Activated T-helper 1 cell treated with anti-CD3 and anti-CD28 coated beads, Interleukin-12 subunit alpha, Interleukin-12 subunit beta, Interleukin-2, Interleukin-4 antibody, amounts not matched to agents 30 ng/mL and 10 ng/mL and 1 ng/mL, durations not matched to agents 14 hours and 24 hours and 36 hours (primary cell): ENCODE measurements at regions of chr16 and their contacts with region 1.

Region 1: DNA sequence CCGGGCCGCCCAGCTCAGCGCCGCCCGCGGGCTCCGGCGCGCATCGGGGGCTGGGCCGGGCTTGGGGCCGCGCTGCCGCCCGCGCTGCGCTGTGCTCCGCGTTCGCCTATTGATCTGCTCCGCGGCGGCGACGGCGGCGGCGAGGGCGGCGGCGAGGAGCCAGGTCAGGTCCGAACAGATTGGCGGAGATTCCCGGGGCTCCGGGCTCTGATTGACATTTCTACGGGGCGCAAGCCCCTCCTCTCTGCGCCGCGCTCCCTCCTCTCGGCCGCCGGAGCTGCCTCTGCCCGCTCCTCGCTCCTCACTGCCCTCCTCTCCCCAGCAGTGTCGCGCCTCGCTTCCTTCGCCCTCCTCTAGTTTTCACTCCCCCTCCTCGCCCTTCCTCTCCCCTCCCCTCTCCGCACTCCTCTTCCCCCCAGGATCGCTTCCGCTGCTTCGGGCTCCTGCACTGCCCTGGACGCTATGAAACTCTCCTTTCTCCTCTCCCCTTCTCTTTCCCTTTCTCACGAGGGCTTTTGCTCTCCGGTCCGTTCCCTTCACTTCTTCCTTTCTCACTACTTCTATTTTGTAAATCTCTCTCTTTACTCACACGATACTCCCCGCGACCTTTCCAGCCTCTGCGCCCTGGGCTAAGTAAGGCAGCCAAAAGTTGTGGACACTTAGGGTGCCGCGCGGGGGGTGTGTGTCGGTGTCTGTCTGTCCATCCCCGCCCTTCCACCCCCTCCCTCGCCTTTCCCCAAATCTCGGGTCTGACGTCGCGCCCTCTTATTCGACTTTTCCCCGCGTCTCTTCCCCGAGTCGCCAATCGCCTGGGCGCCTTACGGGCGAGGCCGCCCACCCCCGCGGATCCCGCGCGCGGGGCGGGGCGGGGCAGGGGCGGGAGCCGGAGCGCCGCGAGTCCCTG is at the start of gene IRX3:
- DNase-seq: peak; percentile 9
- H3K4me3 Mint-ChIP-seq: peak within 1 kb of the TSS; percentile 81
- H3K27ac Mint-ChIP-seq: peak within 1 kb of the TSS; percentile 88
- H3K4me1 Mint-ChIP-seq: peaks cover 15% of the 10 kb centered on the region
- H3K27me3 Mint-ChIP-seq: peaks cover 61% of the 10 kb centered on the region
- total RNA-seq, gene IRX3: 1.1 and 1.4 TPM in 2 replicates

Region 2: DNA sequence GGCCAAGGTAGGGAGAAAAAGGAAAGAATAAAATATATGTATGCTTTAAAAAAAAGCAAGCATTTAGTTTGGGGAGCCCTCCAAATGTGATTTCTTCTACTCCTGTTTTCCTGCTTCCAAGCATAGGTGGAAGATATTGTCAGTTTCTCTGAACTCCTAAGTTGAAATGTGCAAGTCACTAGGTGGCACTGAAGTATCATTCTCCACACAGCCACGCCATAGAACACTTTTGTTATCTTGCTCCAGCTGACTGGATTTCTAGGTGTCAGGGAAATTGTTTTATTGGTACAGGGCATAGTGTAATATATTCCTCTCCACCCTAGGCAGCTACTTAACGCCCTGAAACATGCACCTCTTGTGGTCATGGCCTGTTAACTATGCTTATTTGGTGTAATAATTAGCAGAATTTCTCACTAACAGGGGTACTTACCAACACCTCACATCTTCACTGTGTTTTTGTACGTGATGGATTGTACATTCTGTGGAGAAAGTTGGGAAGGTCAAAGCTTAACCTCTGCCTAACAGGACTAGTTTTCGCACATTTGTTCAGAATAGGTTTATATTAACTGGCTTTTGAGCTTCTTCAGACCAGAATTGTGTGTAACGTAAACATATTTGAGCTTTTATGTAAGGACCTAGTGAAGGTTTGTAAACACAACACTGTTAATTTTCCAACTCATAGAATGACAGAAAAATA is 513.0 kb before region 1 on chr16:
- intact Hi-C with region 1: loop called (anchors 2 kb)
- DNase-seq: no peak
- H3K4me3 Mint-ChIP-seq: no peak overlapping the region
- H3K27ac Mint-ChIP-seq: no peak overlapping the region
- H3K4me1 Mint-ChIP-seq: peaks cover 27% of the 10 kb centered on the region
- H3K27me3 Mint-ChIP-seq: no peaks in the 10 kb centered on the region

Region 3: DNA sequence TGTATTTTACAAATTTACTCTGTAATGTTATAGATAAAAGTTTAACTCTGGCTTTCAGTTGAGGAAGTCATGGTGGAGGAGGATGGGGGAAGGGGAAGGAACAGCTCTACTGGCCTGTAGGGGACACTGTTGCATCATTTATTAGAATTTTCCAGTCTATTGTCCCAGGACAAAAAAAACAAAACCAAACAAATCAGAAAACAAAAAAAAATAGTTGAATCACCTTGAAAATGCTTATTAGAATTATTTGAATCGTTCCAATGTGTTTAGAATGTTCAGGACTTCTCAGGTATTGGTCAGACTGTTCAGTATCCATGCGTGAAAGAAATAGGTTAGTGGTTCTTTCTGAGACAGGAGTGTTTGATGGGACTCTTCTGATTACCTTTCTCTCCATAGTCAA is 340.3 kb before region 1 on chr16:
- intact Hi-C with region 1: loop called (anchors 5 kb)
- DNase-seq: no peak
- H3K4me3 Mint-ChIP-seq: no peak overlapping the region
- H3K27ac Mint-ChIP-seq: no peak overlapping the region
- H3K4me1 Mint-ChIP-seq: peaks cover 43% of the 10 kb centered on the region
- H3K27me3 Mint-ChIP-seq: no peaks in the 10 kb centered on the region

Region 4: GRCh38 chr16:54929090-54930004 is 643.0 kb after region 1 on chr16:
- intact Hi-C with region 1: loop called (anchors 2 kb)
- DNase-seq: peak; percentile 89
- H3K4me3 Mint-ChIP-seq: peak overlapping the region; percentile 88
- H3K27ac Mint-ChIP-seq: peak overlapping the region; percentile 88
- H3K4me1 Mint-ChIP-seq: peaks cover 21% of the 10 kb centered on the region
- H3K27me3 Mint-ChIP-seq: peaks cover 68% of the 10 kb centered on the region

Region 5: GRCh38 chr16:54974367-54974766 is 688.0 kb after region 1 on chr16:
- intact Hi-C with region 1: no loop called
- DNase-seq: no peak
- H3K4me3 Mint-ChIP-seq: no peak overlapping the region
- H3K27ac Mint-ChIP-seq: no peak overlapping the region
- H3K4me1 Mint-ChIP-seq: no peaks in the 10 kb centered on the region
- H3K27me3 Mint-ChIP-seq: no peaks in the 10 kb centered on the region

Region 6: GRCh38 chr16:55324491-55325447 is 1038.4 kb after region 1 on chr16:
- intact Hi-C with region 1: loop called (anchors 5 kb)
- DNase-seq: no peak
- H3K4me3 Mint-ChIP-seq: no peak overlapping the region
- H3K27ac Mint-ChIP-seq: no peak overlapping the region
- H3K4me1 Mint-ChIP-seq: peaks cover 4% of the 10 kb centered on the region
- H3K27me3 Mint-ChIP-seq: peaks cover 45% of the 10 kb centered on the region